Activated CD8-positive, alpha-beta T cell treated with anti-CD3 and anti-CD28 coated beads for 36 hours (primary cell): ENCODE measurements at regions of chr21 and their contacts with region 1.

Region 1: DNA sequence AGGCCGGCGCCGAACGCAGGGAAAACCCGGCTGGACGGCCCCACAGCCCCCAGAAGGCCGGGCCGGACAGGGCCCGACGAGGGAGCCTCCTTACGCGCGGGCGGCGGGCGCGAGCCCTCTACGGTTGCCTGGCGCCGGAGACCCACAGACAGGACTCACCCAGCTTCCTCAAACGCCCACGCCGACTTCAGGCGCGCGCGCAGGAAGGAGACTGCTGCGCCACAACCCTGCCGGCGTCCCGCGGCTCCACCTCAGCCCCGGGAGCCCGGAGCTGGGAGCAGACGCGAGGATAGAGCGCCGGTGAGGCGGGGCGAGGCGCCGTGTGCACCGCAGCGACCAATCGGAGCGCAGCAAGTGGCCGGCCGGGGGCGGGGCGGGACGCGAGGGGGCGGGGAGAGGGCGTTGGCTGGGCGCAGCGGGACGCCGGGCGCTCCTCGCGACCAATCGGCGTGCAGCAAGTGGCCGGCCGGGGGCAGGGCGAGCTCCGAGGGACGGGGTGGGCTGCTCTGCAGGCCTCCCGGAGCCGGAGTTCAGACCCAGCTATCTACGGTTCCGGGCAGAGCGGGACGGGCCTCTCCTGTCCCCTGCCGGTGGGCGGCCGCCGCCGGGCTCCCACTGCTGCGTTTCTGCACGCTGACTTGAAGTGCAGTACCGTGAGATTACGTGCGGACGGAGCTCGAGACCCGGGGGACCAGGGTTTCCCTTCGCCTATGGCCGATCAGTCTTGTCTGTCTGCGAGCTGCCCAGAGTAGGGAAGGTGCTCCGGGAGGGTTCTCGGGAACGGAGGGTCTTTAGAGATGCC is at the start of gene TMEM50B:
- DNase-seq: peak; percentile 98
- ATAC-seq: peak; percentile 96
- H3K4me3 Mint-ChIP-seq: peak within 1 kb of the TSS; percentile 92
- H3K27ac Mint-ChIP-seq: peak within 1 kb of the TSS; percentile 94
- H3K4me1 Mint-ChIP-seq: peaks cover 15% of the 10 kb centered on the region
- H3K27me3 Mint-ChIP-seq: no peaks in the 10 kb centered on the region
- CTCF ChIP-seq: no peak
- total RNA-seq, gene TMEM50B: 14.4 to 15.2 TPM

Region 2: DNA sequence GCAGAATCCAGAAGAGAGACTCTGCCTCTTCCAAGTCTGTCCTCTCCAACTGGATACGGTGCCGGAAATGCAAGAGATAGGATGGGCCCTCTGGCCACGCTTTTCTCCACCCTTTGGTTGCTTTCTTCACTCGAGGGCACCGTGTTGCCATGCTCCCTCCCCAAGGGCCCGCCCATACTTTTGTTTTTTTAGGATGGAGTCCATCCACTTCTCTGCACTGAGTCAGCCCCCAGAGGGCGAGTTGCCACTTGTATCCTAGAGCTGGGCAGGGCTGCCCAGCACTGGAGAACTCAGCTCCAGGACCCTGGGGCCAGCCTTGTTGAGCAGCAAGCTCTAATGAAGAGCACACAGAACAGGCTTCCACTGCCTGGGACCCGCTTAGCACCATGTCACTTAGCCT is 51.2 kb before region 1 on chr21:
- CTCF ChIA-PET with region 1: no interaction called
- POLR2A ChIA-PET with region 1: no interaction called
- intact Hi-C with region 1: no loop called
- DNase-seq: no peak
- ATAC-seq: no peak
- H3K4me3 Mint-ChIP-seq: no peak overlapping the region
- H3K27ac Mint-ChIP-seq: no peak overlapping the region
- H3K4me1 Mint-ChIP-seq: peaks cover 9% of the 10 kb centered on the region
- H3K27me3 Mint-ChIP-seq: no peaks in the 10 kb centered on the region
- CTCF ChIP-seq: no peak

Region 3: GRCh38 chr21:33491373-33492102 is 11.7 kb after region 1 on chr21 and contains the start of gene DNAJC28:
- CTCF ChIA-PET with region 1: interaction called, 6 read pairs
- POLR2A ChIA-PET with region 1: interaction called, 16 read pairs
- intact Hi-C with region 1: no loop called
- DNase-seq: peak; percentile 97
- ATAC-seq: peak; percentile 99
- H3K4me3 Mint-ChIP-seq: peak within 1 kb of the TSS; percentile 78
- H3K27ac Mint-ChIP-seq: peak within 1 kb of the TSS; percentile 88
- H3K4me1 Mint-ChIP-seq: peaks cover 10% of the 10 kb centered on the region
- H3K27me3 Mint-ChIP-seq: no peaks in the 10 kb centered on the region
- CTCF ChIP-seq: no peak
- total RNA-seq, gene DNAJC28: 0.22 to 0.56 TPM